Natural killer cell (primary cell): ENCODE measurements at regions of chr4 and their contacts with region 1.

Region 1: DNA sequence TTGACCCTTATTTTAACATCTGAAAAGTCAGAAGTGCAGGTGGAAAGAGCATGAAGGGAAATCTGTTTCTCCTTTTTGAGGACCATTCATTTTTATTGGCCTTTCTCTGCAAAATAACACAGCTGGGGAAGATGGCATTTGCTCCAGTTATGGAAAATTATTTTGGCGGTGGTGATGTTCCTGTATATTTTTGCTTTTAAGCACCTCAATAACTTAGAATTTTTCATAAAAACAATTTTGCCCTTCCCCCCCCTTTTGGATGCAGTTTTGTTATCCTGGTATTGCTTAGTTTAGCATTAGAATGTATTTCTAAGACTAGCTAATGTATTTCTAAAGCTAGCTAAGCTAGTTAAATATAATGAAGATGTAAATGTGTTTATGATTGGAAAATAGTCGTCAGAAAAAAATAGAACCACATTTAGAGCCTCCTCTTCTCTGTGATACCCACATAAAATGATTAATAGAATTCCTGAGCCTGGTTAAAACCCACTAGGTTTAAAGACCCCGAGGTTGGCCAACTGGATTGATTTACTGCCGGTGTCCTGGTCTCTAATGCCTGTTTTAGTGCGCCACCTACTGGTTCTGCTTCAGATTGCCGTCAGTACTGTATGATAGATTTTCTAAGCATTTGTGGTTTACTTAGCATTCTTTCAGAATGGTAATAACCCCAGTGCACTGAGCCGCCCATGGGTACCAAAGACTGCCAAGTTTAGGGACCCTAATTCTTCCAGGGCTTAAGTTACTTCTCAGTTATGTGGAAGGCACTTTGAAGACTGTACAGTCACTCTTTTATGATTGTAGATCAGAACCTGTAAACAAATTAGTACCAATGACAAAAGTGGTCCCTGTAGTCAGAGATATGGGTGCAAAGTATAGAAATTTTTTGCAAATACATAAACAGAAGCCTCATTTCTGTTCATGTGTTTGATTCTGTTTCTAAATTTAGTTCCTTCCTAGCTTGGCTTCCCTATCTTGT is 11.4 kb downstream of the KLF3 start:
- DNase-seq: peak; percentile 78 to 94
- ATAC-seq: peak; percentile 46 to 66 (median 55)
- H3K4me3 ChIP-seq: no peak overlapping the region
- H3K4me3 Mint-ChIP-seq: peak overlapping the region; percentile 89
- H3K27ac ChIP-seq: peak overlapping the region; percentile 19
- H3K27ac Mint-ChIP-seq: peak overlapping the region; percentile 90 to 99
- H3K4me1 ChIP-seq: peaks cover 63% of the 10 kb centered on the region
- H3K4me1 Mint-ChIP-seq: peaks cover 86 to 87% of the 10 kb centered on the region in 2 donors
- H3K27me3 ChIP-seq: no peaks in the 10 kb centered on the region
- H3K27me3 Mint-ChIP-seq: no peaks in the 10 kb centered on the region
- CTCF ChIP-seq: peak; percentile 91

Region 2: DNA sequence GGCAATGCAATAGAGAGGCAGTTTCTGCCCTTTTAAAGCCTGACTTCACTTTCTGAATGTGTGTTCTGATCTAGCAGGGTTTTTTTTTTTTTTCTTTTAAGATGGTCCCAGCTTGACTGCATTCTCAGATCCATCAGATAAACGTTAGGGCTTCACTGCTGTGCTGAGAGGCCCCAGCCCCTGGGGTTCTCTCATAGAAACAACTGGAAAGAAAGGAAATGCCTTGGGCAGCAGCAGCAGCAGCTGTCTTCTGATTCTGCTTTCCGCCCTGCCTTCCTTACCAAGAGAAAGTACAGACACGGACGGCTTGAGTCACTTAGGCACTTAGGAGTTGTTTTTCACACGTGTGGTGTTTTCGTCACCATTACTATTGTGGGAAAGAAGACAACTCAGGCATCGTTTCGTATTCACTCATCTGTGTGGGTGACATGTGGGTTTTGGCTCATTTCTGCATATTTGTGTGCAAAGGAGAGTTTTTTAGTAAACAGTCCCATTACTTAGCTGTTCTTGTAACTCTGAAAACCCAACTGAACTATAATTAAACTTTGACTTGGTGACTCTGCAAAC is 543.2 kb before region 1 on chr4:
- intact Hi-C with region 1: loop called (anchors 2 kb)
- DNase-seq: peak; percentile 63 to 90
- ATAC-seq: peak; percentile 57 to 82 (median 78)
- H3K4me3 ChIP-seq: no peak overlapping the region
- H3K4me3 Mint-ChIP-seq: peak overlapping the region; percentile 76
- H3K27ac ChIP-seq: peak overlapping the region; percentile 85
- H3K27ac Mint-ChIP-seq: peak overlapping the region; percentile 96 to 99
- H3K4me1 ChIP-seq: peaks cover 55% of the 10 kb centered on the region
- H3K4me1 Mint-ChIP-seq: peaks cover 65 to 68% of the 10 kb centered on the region in 2 donors
- H3K27me3 ChIP-seq: no peaks in the 10 kb centered on the region
- H3K27me3 Mint-ChIP-seq: no peaks in the 10 kb centered on the region
- CTCF ChIP-seq: no peak

Region 3: GRCh38 chr4:38310446-38311043 is 364.9 kb before region 1 on chr4:
- intact Hi-C with region 1: loop called (anchors 2 kb)
- DNase-seq: peak; percentile 51 to 92
- ATAC-seq: peak; percentile 86 to 94 (median 88)
- H3K4me3 ChIP-seq: no peak overlapping the region
- H3K4me3 Mint-ChIP-seq: peak overlapping the region; percentile 67
- H3K27ac ChIP-seq: peak overlapping the region; percentile 21
- H3K27ac Mint-ChIP-seq: peak overlapping the region; percentile 81 to 85
- H3K4me1 ChIP-seq: peaks cover 17% of the 10 kb centered on the region
- H3K4me1 Mint-ChIP-seq: peaks cover 34 to 46% of the 10 kb centered on the region in 2 donors
- H3K27me3 ChIP-seq: no peaks in the 10 kb centered on the region
- H3K27me3 Mint-ChIP-seq: no peaks in the 10 kb centered on the region
- CTCF ChIP-seq: no peak

Region 4: DNA sequence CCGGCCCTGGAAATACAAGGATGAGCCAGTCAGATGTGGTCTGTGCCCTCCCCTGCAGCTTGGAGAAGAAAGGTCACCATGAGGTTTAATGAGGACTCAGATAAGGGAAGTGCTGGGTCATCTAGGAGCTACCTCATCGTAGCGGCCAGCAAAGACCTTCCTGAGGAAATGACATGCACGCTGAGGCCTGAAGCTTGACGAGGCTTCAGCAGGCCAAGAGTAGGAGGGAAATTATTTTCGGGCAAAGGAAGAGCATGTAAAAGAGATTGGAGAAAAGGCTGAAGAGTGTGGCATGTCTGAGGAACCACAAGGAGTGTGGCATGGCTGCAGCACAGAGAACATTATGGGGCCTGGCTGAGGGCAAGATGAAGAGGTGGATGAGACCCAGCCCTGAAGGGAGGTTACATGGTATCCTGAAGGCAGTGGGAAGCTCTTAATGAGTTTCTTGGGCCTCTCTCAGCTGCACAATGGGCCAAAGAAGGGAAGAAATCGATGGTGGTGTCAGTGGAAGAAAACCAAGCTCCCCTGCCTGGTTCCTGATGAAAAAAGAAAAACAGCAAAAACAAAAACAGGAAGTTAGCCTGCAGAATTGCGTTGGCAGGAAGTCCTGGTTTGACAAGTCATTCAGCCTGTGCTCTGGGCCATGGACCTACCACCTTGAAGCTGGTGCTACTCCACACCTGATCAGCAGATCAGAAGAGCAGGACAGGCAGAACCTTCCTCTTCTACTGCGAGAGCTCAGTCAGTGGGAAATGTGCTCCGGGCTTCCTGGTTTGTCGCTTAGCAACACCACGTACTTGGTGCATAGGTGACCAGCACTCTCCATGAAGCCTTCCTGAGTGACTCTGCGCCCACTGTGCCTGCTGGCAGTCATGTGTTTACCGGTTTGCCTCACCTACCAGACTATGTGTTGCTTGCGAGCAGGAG is 146.0 kb before region 1 on chr4:
- intact Hi-C with region 1: loop called (anchors 10 kb)
- DNase-seq: peak in 1 of 2 donors; percentile 72
- ATAC-seq: peak; percentile 84 to 93 (median 84)
- H3K4me3 ChIP-seq: no peak overlapping the region
- H3K4me3 Mint-ChIP-seq: peak overlapping the region; percentile 43
- H3K27ac ChIP-seq: peak overlapping the region; percentile 75
- H3K27ac Mint-ChIP-seq: peak overlapping the region; percentile 78 to 91
- H3K4me1 ChIP-seq: peaks cover 19% of the 10 kb centered on the region
- H3K4me1 Mint-ChIP-seq: peaks cover 17 to 19% of the 10 kb centered on the region in 2 donors
- H3K27me3 ChIP-seq: no peaks in the 10 kb centered on the region
- H3K27me3 Mint-ChIP-seq: peaks cover 3 to 9% of the 10 kb centered on the region in 2 donors
- CTCF ChIP-seq: no peak

Region 5: GRCh38 chr4:38663801-38664705 is 11.4 kb before region 1 on chr4 and contains the start of gene KLF3:
- intact Hi-C with region 1: loop called (anchors 1 kb)
- DNase-seq: peak; percentile 90 to 95
- ATAC-seq: peak; percentile 71 to 91 (median 80)
- H3K4me3 ChIP-seq: peak within 1 kb of the TSS; percentile 85
- H3K4me3 Mint-ChIP-seq: peak within 1 kb of the TSS; percentile 97
- H3K27ac ChIP-seq: peak within 1 kb of the TSS; percentile 98
- H3K27ac Mint-ChIP-seq: peak within 1 kb of the TSS; percentile 99
- H3K4me1 ChIP-seq: peaks cover 38% of the 10 kb centered on the region
- H3K4me1 Mint-ChIP-seq: peaks cover 55 to 62% of the 10 kb centered on the region in 2 donors
- H3K27me3 ChIP-seq: no peaks in the 10 kb centered on the region
- H3K27me3 Mint-ChIP-seq: no peaks in the 10 kb centered on the region
- CTCF ChIP-seq: no peak
- total RNA-seq, gene KLF3: 109 to 114 (median 112) TPM

Region 6: DNA sequence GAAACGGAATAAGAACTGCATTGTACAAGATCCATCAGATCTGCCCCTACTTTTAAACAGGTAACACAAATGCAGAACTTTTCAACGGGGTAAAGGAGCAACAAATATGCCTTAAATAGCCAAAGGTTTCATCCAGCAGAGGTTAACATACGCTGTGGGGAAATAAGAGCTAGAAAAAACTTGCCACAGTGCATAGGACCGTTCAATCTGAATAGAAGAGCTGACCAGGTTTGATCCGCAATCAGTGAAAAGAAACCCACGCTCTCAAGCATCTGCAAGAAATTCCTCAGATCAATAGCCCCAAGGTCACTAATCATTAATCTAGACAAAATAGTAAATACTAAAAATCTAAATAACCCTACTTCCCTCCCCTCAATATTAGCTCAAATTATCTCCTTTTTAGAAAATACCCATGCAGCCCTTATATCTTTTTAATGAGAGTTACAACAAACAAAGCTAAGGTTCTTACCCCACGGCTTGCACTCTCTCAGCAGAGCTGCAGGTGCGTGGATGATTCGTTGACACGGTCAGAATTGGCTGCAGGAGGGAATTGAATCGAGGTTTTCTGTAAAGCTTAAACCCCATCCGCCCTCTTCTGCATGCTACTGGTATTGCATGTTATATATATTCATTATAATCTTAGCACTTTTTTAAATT is 107.1 kb after region 1 on chr4 and contains the start of gene TLR10:
- intact Hi-C with region 1: no loop called
- DNase-seq: peak in 1 of 2 donors; percentile 76
- ATAC-seq: peak; percentile 80 to 89 (median 85)
- H3K4me3 ChIP-seq: peak within 1 kb of the TSS; percentile 35
- H3K4me3 Mint-ChIP-seq: no peak within 1 kb of the TSS
- H3K27ac ChIP-seq: peak within 1 kb of the TSS; percentile 47
- H3K27ac Mint-ChIP-seq: no peak within 1 kb of the TSS
- H3K4me1 ChIP-seq: peaks cover 5% of the 10 kb centered on the region
- H3K4me1 Mint-ChIP-seq: peaks cover 5% of the 10 kb centered on the region in 2 donors
- H3K27me3 ChIP-seq: no peaks in the 10 kb centered on the region
- H3K27me3 Mint-ChIP-seq: peaks cover 3 to 8% of the 10 kb centered on the region in 2 donors
- CTCF ChIP-seq: peak; percentile 81
- total RNA-seq, gene TLR10: 0.31 to 0.63 (median 0.59) TPM

Region 7: DNA sequence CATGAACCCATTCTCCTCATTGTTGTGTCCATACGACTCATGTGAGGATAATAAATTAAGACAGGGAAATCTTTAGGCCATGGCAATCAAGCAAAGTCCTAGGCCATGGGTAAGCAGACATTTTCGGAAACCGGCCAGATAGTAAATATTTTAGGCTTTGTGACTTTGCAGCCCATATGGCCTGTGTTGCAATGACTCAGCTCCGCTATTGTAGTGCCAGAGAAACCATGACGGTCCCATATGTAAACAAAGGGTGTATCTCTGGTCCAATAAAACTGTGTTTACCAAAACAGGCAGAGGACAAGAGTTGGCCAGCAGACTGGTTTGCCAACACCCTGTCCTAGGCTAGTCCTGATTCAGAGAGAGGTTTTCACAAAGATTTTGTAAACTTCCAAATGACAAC is 197.2 kb after region 1 on chr4:
- intact Hi-C with region 1: no loop called
- DNase-seq: no peak
- ATAC-seq: no peak
- H3K4me3 ChIP-seq: no peak overlapping the region
- H3K4me3 Mint-ChIP-seq: no peak overlapping the region
- H3K27ac ChIP-seq: no peak overlapping the region
- H3K27ac Mint-ChIP-seq: no peak overlapping the region
- H3K4me1 ChIP-seq: peaks cover 6% of the 10 kb centered on the region
- H3K4me1 Mint-ChIP-seq: peaks cover 0 to 10% of the 10 kb centered on the region in 2 donors
- H3K27me3 ChIP-seq: no peaks in the 10 kb centered on the region
- H3K27me3 Mint-ChIP-seq: peaks cover 16 to 20% of the 10 kb centered on the region in 2 donors
- CTCF ChIP-seq: no peak